Colonic mucosa (tissue), 4 donors: ENCODE measurements at regions of chr17 and their contacts with region 1.

Region 1: GRCh38 chr17:50026901-50027630 is 28.8 kb upstream of the ITGA3 start:
- DNase-seq: peak; percentile 91
- H3K4me3 ChIP-seq: no peak overlapping the region
- H3K27ac ChIP-seq: no peak overlapping the region
- H3K4me1 ChIP-seq: no peaks in the 10 kb centered on the region
- H3K27me3 ChIP-seq: no peaks in the 10 kb centered on the region
- CTCF ChIP-seq: peak; percentile 99

Region 2: GRCh38 chr17:50079334-50080095 is 52.4 kb after region 1 on chr17:
- intact Hi-C with region 1: loop called (anchors 5 kb)
- DNase-seq: peak; percentile 89
- H3K4me3 ChIP-seq: no peak overlapping the region
- H3K27ac ChIP-seq: no peak overlapping the region
- H3K4me1 ChIP-seq: peaks cover 5% of the 10 kb centered on the region
- H3K27me3 ChIP-seq: no peaks in the 10 kb centered on the region
- CTCF ChIP-seq: peak; percentile 77

Region 3: DNA sequence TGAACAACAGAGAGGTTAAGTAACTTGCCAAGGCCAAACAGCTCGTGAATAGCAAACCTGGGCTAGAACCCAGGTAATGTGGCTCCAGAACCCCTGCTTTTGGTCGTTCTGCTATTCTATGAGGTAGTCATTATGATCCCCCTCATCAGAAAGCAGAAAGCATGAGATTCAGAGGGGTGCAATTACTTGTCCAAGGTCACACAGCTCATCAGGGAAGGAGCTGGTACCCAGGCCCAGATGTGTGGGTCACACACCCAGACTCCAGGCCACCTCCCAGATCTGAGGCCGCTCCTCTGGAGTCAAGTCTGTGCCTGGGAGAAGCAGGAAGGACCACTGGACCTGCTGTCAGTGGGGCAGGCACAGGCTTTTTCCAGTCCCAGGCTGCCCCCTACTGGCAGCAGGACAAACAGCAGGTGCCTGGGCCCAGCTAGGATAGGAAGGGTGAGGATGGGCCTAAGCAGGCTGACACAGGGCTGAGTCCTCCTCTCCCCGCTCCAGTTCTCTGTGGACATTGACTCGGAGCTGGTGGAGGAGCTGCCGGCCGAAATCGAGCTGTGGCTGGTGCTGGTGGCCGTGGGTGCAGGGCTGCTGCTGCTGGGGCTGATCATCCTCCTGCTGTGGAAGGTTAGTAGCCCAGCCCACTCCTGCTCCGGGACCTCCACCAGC is 60.3 kb after region 1 on chr17:
- intact Hi-C with region 1: loop called (anchors 2 kb)
- DNase-seq: peak; percentile 77
- H3K4me3 ChIP-seq: no peak overlapping the region
- H3K27ac ChIP-seq: no peak overlapping the region
- H3K4me1 ChIP-seq: no peaks in the 10 kb centered on the region
- H3K27me3 ChIP-seq: no peaks in the 10 kb centered on the region
- CTCF ChIP-seq: peak; percentile 93